Heart left ventricle (tissue), 16 donors: ENCODE measurements at regions of chr5 and their contacts with region 1.

Region 1: DNA sequence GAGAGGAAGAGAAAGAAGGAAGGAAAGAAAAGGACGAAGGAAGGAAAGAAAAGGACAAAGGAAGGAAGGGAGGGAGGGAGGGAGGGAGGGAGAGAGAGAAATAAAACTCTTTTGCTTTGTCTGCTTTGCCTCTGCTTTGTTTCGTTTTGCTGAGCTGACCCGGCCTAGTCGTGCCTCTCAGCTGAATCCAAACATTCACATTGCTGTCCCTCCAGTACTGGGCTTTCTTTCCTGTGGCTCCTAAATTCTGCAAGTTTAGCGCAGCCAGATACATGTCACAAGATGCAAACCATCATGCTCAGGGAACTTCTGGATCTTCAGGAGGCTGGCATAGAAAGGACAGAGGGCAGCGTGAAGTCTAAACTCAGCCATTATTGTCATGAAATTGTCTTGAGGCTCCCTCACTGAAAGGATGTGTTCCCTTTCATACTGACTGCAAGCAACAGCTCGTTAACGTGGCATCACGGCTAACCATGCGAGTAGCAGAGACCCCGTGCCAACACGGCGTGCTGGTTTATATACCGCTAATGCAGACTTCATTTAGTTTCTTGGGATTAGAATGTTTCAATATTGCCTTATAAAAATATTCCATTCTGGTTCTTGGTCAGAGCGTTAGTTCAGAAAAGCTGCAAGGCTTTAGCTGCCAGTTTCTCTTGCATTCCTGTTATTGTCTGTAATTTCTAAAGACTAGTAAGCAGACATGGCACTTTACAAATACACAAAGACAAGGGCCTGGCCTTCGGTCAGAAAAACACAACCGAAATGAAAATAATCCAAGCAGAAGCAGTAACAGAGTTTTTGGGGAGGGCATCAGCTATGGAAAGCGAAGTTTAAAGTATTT is 94.2 kb downstream of the TMEM174 start:
- DNase-seq: no peak
- ATAC-seq: no peak
- H3K4me3 ChIP-seq: no peak overlapping the region
- H3K27ac ChIP-seq: peak overlapping the region in 1 of 12 donors; percentile 21
- H3K4me1 ChIP-seq: no peaks in the 10 kb centered on the region
- H3K27me3 ChIP-seq: peaks cover 0 to 51% (median 10%) of the 10 kb centered on the region in 9 donors
- CTCF ChIP-seq: no peak
- POLR2A ChIP-seq: no peak

Region 2: GRCh38 chr5:72633649-72634048 is 633.5 kb before region 1 on chr5:
- intact Hi-C with region 1: loop called in 1 of 10 experiments (anchors 5 kb)
- DNase-seq: no peak
- ATAC-seq: no peak
- H3K4me3 ChIP-seq: no peak overlapping the region
- H3K27ac ChIP-seq: no peak overlapping the region
- H3K4me1 ChIP-seq: no peaks in the 10 kb centered on the region
- H3K27me3 ChIP-seq: no peaks in the 10 kb centered on the region
- CTCF ChIP-seq: no peak
- POLR2A ChIP-seq: no peak